ENCODE measurements at regions of chr7 and their contacts with region 1.

Region 1: GRCh38 chr7:139645572-139646523 is 122.4 kb downstream of the CLEC2L start:
- DNase-seq: peak; percentile 47 to 92
- H3K4me3 ChIP-seq: no peak overlapping the region
- H3K27ac ChIP-seq: no peak overlapping the region
- H3K4me1 ChIP-seq: peaks cover 7 to 12% (median 9%) of the 10 kb centered on the region in 4 experiments
- H3K27me3 ChIP-seq: no peaks in the 10 kb centered on the region
- CTCF ChIP-seq: peak; percentile 68 to 91 (median 88)
- EP300 ChIP-seq: no peak
- POLR2A ChIP-seq: no peak
- RAD21 ChIP-seq: peak; percentile 97 to 98

Region 2: GRCh38 chr7:139439375-139439774 is 206.5 kb before region 1 on chr7:
- CTCF ChIA-PET with region 1: no interaction called
- POLR2A ChIA-PET with region 1: no interaction called
- DNase-seq: no peak
- H3K4me3 ChIP-seq: no peak overlapping the region
- H3K27ac ChIP-seq: no peak overlapping the region
- H3K4me1 ChIP-seq: no peaks in the 10 kb centered on the region
- H3K27me3 ChIP-seq: no peaks in the 10 kb centered on the region
- CTCF ChIP-seq: no peak
- EP300 ChIP-seq: no peak
- POLR2A ChIP-seq: no peak
- RAD21 ChIP-seq: no peak

Region 3: DNA sequence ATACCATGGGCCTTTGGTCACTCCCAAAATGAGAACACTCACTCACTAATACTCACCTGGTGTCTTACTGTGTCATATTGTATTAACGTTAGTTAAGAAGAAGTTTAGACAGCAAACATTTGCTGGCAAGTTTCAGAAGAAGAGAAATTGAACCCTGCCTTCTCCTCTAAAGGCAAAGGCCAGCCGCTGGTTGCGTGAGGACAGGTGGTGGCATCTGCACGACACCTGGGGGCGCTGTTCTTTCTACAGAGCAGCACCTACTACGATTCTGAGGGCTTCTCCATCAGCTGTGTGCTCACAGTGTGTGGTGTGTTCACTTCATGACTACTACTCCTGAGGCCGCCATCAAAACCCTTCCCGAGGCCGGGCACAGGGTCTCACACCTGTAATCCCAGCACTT is 140.3 kb before region 1 on chr7:
- CTCF ChIA-PET with region 1: interaction called, 10 read pairs
- POLR2A ChIA-PET with region 1: no interaction called
- DNase-seq: peak in 1 of 2 experiments; percentile 81
- H3K4me3 ChIP-seq: no peak overlapping the region
- H3K27ac ChIP-seq: no peak overlapping the region
- H3K4me1 ChIP-seq: peaks cover 0 to 4% (median 0%) of the 10 kb centered on the region in 4 experiments; a peak in 1 of 7 replicates
- H3K27me3 ChIP-seq: no peaks in the 10 kb centered on the region
- CTCF ChIP-seq: peak; percentile 86 to 93 (median 93)
- EP300 ChIP-seq: no peak
- POLR2A ChIP-seq: no peak
- RAD21 ChIP-seq: peak; percentile 78 to 82

Region 4: GRCh38 chr7:139523199-139523941 is 122.5 kb before region 1 on chr7 and contains the start of gene CLEC2L:
- CTCF ChIA-PET with region 1: no interaction called
- POLR2A ChIA-PET with region 1: no interaction called
- DNase-seq: peak in 1 of 2 experiments; percentile 61
- H3K4me3 ChIP-seq: peak within 1 kb of the TSS; percentile 43 to 69 (median 49)
- H3K27ac ChIP-seq: no peak within 1 kb of the TSS
- H3K4me1 ChIP-seq: peaks cover 0 to 7% (median 0%) of the 10 kb centered on the region in 4 experiments; a peak in 2 of 7 replicates
- H3K27me3 ChIP-seq: peaks cover 20 to 47% (median 37%) of the 10 kb centered on the region in 4 experiments
- CTCF ChIP-seq: no peak
- EP300 ChIP-seq: no peak
- POLR2A ChIP-seq: no peak
- RAD21 ChIP-seq: no peak
- total RNA-seq, gene CLEC2L: 0.20 TPM in 1 of 2 replicates, not detected in the other

Region 5: GRCh38 chr7:139635526-139636302 is 10.1 kb before region 1 on chr7:
- CTCF ChIA-PET with region 1: interaction called, 66 read pairs
- POLR2A ChIA-PET with region 1: no interaction called
- DNase-seq: no peak
- H3K4me3 ChIP-seq: no peak overlapping the region
- H3K27ac ChIP-seq: no peak overlapping the region
- H3K4me1 ChIP-seq: peaks cover 0 to 3% (median 0%) of the 10 kb centered on the region in 4 experiments; a peak in 3 of 7 replicates
- H3K27me3 ChIP-seq: no peaks in the 10 kb centered on the region
- CTCF ChIP-seq: no peak
- EP300 ChIP-seq: no peak
- POLR2A ChIP-seq: no peak
- RAD21 ChIP-seq: no peak

Region 6: GRCh38 chr7:139702811-139703486 is 57.1 kb after region 1 on chr7:
- CTCF ChIA-PET with region 1: interaction called, 34 read pairs
- POLR2A ChIA-PET with region 1: no interaction called
- DNase-seq: no peak
- H3K4me3 ChIP-seq: no peak overlapping the region
- H3K27ac ChIP-seq: no peak overlapping the region
- H3K4me1 ChIP-seq: peaks cover 4 to 15% (median 9%) of the 10 kb centered on the region in 4 experiments
- H3K27me3 ChIP-seq: no peaks in the 10 kb centered on the region
- CTCF ChIP-seq: no peak
- EP300 ChIP-seq: no peak
- POLR2A ChIP-seq: no peak
- RAD21 ChIP-seq: no peak

Region 7: GRCh38 chr7:139745678-139746143 is 99.9 kb after region 1 on chr7:
- CTCF ChIA-PET with region 1: interaction called, 28 read pairs
- POLR2A ChIA-PET with region 1: interaction called, 4 read pairs
- DNase-seq: no peak
- H3K4me3 ChIP-seq: no peak overlapping the region
- H3K27ac ChIP-seq: no peak overlapping the region
- H3K4me1 ChIP-seq: peaks cover 0 to 12% (median 6%) of the 10 kb centered on the region in 4 experiments
- H3K27me3 ChIP-seq: no peaks in the 10 kb centered on the region
- CTCF ChIP-seq: no peak
- EP300 ChIP-seq: no peak
- POLR2A ChIP-seq: no peak
- RAD21 ChIP-seq: no peak

Region 8: DNA sequence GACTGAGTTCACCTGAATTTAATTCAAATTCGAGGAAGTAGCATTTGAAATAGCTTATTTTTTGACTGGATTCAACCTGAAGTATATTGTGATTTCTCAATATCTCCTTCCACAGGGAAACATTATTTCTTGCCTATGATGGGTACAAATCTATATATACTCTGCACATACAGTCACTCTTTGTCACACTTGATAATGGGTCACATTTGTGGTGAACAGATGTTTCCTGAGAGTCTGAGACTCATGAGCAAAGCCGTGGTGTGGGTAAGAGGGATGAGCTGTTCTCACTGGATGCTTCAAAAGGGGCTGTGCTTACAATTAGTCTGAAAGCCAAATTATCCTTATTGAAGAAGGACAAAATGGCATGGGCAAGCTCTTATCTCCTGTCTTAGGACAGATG is 165.2 kb after region 1 on chr7:
- CTCF ChIA-PET with region 1: interaction called, 11 read pairs
- POLR2A ChIA-PET with region 1: no interaction called
- DNase-seq: no peak
- H3K4me3 ChIP-seq: no peak overlapping the region
- H3K27ac ChIP-seq: no peak overlapping the region
- H3K4me1 ChIP-seq: no peaks in the 10 kb centered on the region
- H3K27me3 ChIP-seq: no peaks in the 10 kb centered on the region; a peak in 1 of 7 replicates
- CTCF ChIP-seq: no peak
- EP300 ChIP-seq: no peak
- POLR2A ChIP-seq: no peak
- RAD21 ChIP-seq: no peak

Region 9: GRCh38 chr7:139995017-139995931 is 349.4 kb after region 1 on chr7:
- CTCF ChIA-PET with region 1: interaction called, 122 read pairs
- POLR2A ChIA-PET with region 1: no interaction called
- DNase-seq: no peak
- H3K4me3 ChIP-seq: no peak overlapping the region
- H3K27ac ChIP-seq: no peak overlapping the region
- H3K4me1 ChIP-seq: peaks cover 0 to 5% (median 0%) of the 10 kb centered on the region in 4 experiments; a peak in 1 of 7 replicates
- H3K27me3 ChIP-seq: no peaks in the 10 kb centered on the region
- CTCF ChIP-seq: no peak
- EP300 ChIP-seq: no peak
- POLR2A ChIP-seq: no peak
- RAD21 ChIP-seq: no peak

Region 10: GRCh38 chr7:140017543-140017942 is 371.7 kb after region 1 on chr7:
- CTCF ChIA-PET with region 1: no interaction called
- POLR2A ChIA-PET with region 1: no interaction called
- DNase-seq: no peak
- H3K4me3 ChIP-seq: no peak overlapping the region
- H3K27ac ChIP-seq: no peak overlapping the region
- H3K4me1 ChIP-seq: no peaks in the 10 kb centered on the region
- H3K27me3 ChIP-seq: no peaks in the 10 kb centered on the region
- CTCF ChIP-seq: no peak
- EP300 ChIP-seq: no peak
- POLR2A ChIP-seq: no peak
- RAD21 ChIP-seq: no peak

Measured in H1 (cell line).